ENCODE measurements at regions of chr12 and their contacts with region 1.

Region 1: GRCh38 chr12:6752921-6753771 is at the start of gene MLF2:
- DNase-seq: peak; percentile 99
- H3K4me3 Mint-ChIP-seq: peak within 1 kb of the TSS; percentile 95
- H3K27ac Mint-ChIP-seq: peak within 1 kb of the TSS; percentile 92
- H3K4me1 Mint-ChIP-seq: peaks cover 10% of the 10 kb centered on the region
- H3K27me3 Mint-ChIP-seq: no peaks in the 10 kb centered on the region
- CTCF ChIP-seq: no peak
- total RNA-seq, gene MLF2: 151 and 162 TPM in 2 replicates

Region 2: DNA sequence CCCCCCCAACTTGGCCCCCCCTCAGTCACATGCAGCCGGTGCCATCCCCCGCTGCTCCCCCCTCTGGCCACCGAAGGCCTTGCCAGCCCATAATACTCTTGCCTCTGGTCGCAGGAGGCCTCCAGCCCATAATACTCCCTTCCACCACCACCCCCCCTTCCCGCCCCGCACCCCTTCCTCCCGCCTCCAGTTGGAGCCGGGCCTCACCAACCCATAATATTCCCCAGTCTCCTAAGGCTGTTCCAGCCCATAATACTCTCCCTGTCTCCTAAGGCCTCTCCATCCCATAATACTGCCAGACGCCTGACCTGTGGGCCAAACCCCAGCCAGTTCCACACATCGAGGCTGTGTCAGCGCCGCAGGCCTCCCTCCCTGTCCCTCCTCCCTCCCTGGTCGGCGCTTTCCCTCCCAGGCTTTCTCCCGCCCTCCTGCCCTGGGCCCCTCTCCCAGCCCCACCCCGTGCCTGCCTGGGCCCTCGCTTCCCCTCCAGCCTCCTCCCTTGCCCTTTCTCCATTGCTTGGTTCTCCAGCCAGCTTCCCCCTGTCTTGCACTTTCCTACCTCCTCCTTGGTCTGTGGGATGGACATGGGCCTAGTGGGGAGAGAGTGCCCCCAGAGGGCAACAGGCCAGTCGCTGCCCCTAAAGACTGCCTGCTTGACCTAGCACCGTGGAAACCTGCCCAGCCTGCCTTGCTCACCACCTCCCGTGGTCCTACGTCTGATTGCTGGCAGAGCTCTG is 139.2 kb before region 1 on chr12:
- CTCF ChIA-PET with region 1: interaction called, 8 read pairs
- POLR2A ChIA-PET with region 1: interaction called, 3 read pairs
- intact Hi-C with region 1: loop called (anchors 2 kb)
- DNase-seq: peak; percentile 86
- H3K4me3 Mint-ChIP-seq: no peak overlapping the region
- H3K27ac Mint-ChIP-seq: peak overlapping the region; percentile 90
- H3K4me1 Mint-ChIP-seq: peaks cover 32% of the 10 kb centered on the region
- H3K27me3 Mint-ChIP-seq: no peaks in the 10 kb centered on the region
- CTCF ChIP-seq: no peak

Region 3: GRCh38 chr12:6735448-6736191 is 17.5 kb before region 1 on chr12:
- CTCF ChIA-PET with region 1: interaction called, 83 read pairs
- POLR2A ChIA-PET with region 1: interaction called, 46 read pairs
- intact Hi-C with region 1: loop called (anchors 1 kb)
- DNase-seq: peak; percentile 85
- H3K4me3 Mint-ChIP-seq: peak overlapping the region; percentile 34
- H3K27ac Mint-ChIP-seq: peak overlapping the region; percentile 14
- H3K4me1 Mint-ChIP-seq: peaks cover 9% of the 10 kb centered on the region
- H3K27me3 Mint-ChIP-seq: no peaks in the 10 kb centered on the region
- CTCF ChIP-seq: peak; percentile 57

Region 4: DNA sequence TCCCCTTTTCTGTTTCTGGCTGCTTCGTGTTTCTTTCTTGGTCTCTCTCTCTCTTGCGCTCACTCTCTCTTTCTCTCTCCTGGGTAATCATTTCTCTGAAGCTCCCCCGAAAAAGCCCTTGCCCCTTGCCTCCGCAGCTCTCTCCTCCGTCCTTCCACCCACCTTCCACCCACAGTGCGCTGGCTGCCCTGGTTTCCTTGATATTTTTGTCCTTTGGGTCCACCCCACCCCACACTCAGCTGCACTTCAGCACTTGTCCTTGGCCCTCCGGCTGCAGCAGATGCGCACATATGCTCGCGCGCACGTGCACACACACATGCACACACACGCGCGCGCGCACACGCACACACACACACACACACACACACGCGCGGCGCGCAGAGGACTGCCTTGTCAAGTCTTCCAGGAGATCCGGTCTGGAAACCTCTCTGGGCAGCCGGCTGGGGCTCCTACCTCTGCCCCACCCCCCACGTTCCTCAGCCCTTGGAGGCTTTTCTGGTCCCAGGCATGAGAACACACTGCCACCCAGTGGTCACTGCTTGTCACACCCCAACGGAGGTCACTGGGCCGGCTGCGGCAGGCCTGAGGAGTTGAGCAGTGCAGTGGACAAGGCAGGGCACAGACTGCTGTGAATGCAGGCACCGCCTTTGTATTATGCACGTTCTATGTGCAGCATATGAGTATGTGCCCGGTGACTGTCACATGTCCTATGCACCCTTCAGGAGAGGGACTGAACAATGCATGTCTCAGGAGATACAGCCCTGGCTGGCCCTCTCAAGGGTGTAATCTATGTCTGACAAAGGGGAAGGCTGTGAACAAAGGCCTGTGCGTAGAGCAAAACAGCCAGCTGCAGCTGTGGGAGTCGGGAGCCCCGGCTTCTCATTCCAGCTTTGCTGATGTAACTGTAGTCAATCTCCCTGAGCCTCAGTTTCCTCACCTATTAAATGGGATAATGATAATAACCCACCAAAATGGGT is 25.7 kb after region 1 on chr12:
- CTCF ChIA-PET with region 1: interaction called, 110 read pairs
- POLR2A ChIA-PET with region 1: interaction called, 27 read pairs
- intact Hi-C with region 1: loop called (anchors 1 kb)
- DNase-seq: peak; percentile 94
- H3K4me3 Mint-ChIP-seq: peak overlapping the region; percentile 65
- H3K27ac Mint-ChIP-seq: no peak overlapping the region
- H3K4me1 Mint-ChIP-seq: peaks cover 10% of the 10 kb centered on the region
- H3K27me3 Mint-ChIP-seq: no peaks in the 10 kb centered on the region
- CTCF ChIP-seq: peak; percentile 94

Region 5: DNA sequence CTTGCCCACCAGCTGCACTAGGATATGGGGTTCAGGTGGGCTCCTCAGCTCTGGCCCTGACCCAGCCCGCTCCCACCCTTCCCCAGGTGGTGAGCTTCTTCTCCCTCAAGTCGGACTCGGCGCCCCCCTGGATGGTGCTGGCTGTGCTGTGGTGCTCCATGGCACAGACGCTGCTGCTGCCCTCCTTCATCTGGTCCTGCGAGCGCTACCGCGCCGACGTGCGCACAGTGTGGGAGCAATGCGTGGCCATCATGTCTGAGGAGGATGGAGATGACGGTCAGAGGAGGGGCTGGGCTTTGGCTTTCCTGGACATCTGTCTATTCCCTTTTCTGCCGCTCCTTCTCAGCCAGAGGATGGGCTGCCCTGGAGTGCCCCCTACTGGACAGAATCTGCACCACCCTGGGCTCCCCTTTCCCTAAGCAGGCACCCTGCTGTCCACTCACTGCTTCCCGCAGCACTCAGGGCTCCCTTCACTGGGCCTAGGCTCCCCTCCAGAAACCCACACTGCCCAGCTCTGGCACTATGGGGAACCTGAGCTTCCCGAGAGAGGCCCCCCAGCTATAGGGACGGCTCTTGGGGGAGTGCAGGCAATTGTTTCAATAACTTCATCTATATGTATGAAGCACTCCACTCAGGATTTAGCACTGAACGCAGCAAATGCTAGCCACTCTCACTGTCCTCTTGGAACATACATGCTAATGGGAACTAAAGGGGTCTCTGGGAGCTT is 72.4 kb after region 1 on chr12:
- CTCF ChIA-PET with region 1: interaction called, 74 read pairs
- POLR2A ChIA-PET with region 1: interaction called, 3 read pairs
- intact Hi-C with region 1: loop called (anchors 1 kb)
- DNase-seq: peak; percentile 84
- H3K4me3 Mint-ChIP-seq: no peak overlapping the region
- H3K27ac Mint-ChIP-seq: no peak overlapping the region
- H3K4me1 Mint-ChIP-seq: peaks cover 29% of the 10 kb centered on the region
- H3K27me3 Mint-ChIP-seq: peaks cover 99% of the 10 kb centered on the region
- CTCF ChIP-seq: peak; percentile 90

Region 6: GRCh38 chr12:6846316-6846869 is 93.2 kb after region 1 on chr12:
- CTCF ChIA-PET with region 1: interaction called, 18 read pairs
- POLR2A ChIA-PET with region 1: interaction called, 43 read pairs
- intact Hi-C with region 1: no loop called
- DNase-seq: no peak
- H3K4me3 Mint-ChIP-seq: no peak overlapping the region
- H3K27ac Mint-ChIP-seq: no peak overlapping the region
- H3K4me1 Mint-ChIP-seq: peaks cover 18% of the 10 kb centered on the region
- H3K27me3 Mint-ChIP-seq: no peaks in the 10 kb centered on the region
- CTCF ChIP-seq: no peak

Measured in MCF 10A (cell line).